CD14-positive monocyte (primary cell): ENCODE measurements at regions of chr15 and their contacts with region 1.

Region 1: GRCh38 chr15:44663409-44664308 is at the start of gene SPG11:
- DNase-seq: peak; percentile 98
- H3K4me3 ChIP-seq: peak within 1 kb of the TSS; percentile 65 to 97 (median 86)
- H3K4me3 Mint-ChIP-seq: peak within 1 kb of the TSS; percentile 96 to 97
- H3K27ac ChIP-seq: peak within 1 kb of the TSS; percentile 96 to 98
- H3K27ac Mint-ChIP-seq: peak within 1 kb of the TSS; percentile 98 to 99 (median 99)
- H3K4me1 ChIP-seq: peaks cover 33 to 38% of the 10 kb centered on the region in 2 donors
- H3K4me1 Mint-ChIP-seq: peaks cover 40% of the 10 kb centered on the region
- H3K27me3 ChIP-seq: no peaks in the 10 kb centered on the region
- H3K27me3 Mint-ChIP-seq: peaks cover 0 to 1% (median 0%) of the 10 kb centered on the region in 3 donors
- CTCF ChIP-seq: peak; percentile 90
- polyA plus RNA-seq, gene SPG11: 26.4 to 140 (median 50.4) TPM

Region 2: GRCh38 chr15:44296625-44297524 is 366.8 kb before region 1 on chr15:
- intact Hi-C with region 1: loop called in 1 of 2 experiments (anchors 5 kb)
- DNase-seq: peak; percentile 77 to 92 (median 91)
- H3K4me3 ChIP-seq: peak overlapping the region in 1 of 3 experiments; percentile 40
- H3K4me3 Mint-ChIP-seq: peak overlapping the region in 1 of 2 donors; percentile 77
- H3K27ac ChIP-seq: peak overlapping the region; percentile 48 to 55
- H3K27ac Mint-ChIP-seq: peak overlapping the region; percentile 75 to 95 (median 91)
- H3K4me1 ChIP-seq: peaks cover 45 to 55% of the 10 kb centered on the region in 2 donors
- H3K4me1 Mint-ChIP-seq: peaks cover 44% of the 10 kb centered on the region
- H3K27me3 ChIP-seq: no peaks in the 10 kb centered on the region
- H3K27me3 Mint-ChIP-seq: peaks cover 0 to 3% (median 0%) of the 10 kb centered on the region in 3 donors
- CTCF ChIP-seq: no peak

Region 3: DNA sequence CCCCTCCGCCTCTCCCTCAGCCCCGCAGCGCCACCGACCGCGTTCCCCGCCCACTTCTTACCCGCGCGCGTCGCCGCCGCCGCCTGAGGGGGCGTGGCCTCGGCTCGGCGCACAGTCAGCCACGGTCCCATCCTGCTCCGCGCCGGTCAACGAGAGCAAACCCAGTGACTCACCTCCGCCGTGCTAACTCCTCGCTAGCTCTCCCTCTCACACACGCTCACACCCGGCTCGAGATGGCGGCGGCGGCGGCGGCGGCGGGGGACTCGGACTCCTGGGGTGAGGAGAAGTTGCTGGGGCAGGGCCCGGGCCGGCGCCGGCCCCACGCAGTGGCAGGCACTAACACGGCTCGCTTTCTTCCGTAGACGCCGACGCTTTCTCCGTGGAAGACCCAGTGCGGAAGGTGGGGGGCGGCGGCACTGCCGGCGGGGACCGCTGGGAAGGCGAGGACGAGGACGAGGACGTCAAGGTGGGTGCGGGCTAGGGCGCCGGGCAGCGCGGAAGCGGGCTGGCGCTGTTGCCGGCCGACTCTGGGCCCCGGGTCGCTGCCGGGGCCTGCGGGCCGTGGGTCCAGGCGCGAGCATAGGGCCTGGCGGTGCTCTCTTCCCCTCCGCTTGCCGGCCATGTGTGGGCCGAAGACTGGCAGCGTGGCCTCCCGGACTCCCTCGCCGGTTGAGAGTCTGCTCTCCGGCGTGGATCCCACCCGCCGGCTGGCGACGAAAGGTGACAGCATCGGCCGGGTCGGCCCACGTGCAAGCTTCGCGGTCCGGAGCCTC is 126.5 kb before region 1 on chr15 and contains the start of gene EIF3J:
- intact Hi-C with region 1: loop called in 1 of 2 experiments (anchors 5 kb)
- DNase-seq: peak; percentile 97 to 98 (median 97)
- H3K4me3 ChIP-seq: peak within 1 kb of the TSS; percentile 86 to 95 (median 90)
- H3K4me3 Mint-ChIP-seq: peak within 1 kb of the TSS; percentile 85 to 93
- H3K27ac ChIP-seq: peak within 1 kb of the TSS; percentile 94 to 96
- H3K27ac Mint-ChIP-seq: peak within 1 kb of the TSS; percentile 93 to 98 (median 96)
- H3K4me1 ChIP-seq: peaks cover 12 to 27% of the 10 kb centered on the region in 2 donors
- H3K4me1 Mint-ChIP-seq: peaks cover 32% of the 10 kb centered on the region
- H3K27me3 ChIP-seq: no peaks in the 10 kb centered on the region
- H3K27me3 Mint-ChIP-seq: no peaks in the 10 kb centered on the region
- CTCF ChIP-seq: no peak
- polyA plus RNA-seq, gene EIF3J: 9.7 to 20.1 (median 13.5) TPM

Region 4: DNA sequence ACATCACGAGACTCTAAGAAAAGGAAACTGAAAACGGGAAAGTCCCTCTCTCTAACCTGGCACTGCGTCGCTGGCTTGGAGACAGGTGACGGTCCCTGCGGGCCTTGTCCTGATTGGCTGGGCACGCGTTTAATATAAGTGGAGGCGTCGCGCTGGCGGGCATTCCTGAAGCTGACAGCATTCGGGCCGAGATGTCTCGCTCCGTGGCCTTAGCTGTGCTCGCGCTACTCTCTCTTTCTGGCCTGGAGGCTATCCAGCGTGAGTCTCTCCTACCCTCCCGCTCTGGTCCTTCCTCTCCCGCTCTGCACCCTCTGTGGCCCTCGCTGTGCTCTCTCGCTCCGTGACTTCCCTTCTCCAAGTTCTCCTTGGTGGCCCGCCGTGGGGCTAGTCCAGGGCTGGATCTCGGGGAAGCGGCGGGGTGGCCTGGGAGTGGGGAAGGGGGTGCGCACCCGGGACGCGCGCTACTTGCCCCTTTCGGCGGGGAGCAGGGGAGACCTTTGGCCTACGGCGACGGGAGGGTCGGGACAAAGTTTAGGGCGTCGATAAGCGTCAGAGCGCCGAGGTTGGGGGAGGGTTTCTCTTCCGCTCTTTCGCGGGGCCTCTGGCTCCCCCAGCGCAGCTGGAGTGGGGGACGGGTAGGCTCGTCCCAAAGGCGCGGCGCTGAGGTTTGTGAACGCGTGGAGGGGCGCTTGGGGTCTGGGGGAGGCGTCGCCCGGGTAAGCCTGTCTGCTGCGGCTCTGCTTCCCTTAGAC is 47.9 kb after region 1 on chr15 and contains the start of gene B2M:
- intact Hi-C with region 1: loop called (anchors 2 kb)
- DNase-seq: peak; percentile 97 to 99 (median 98)
- H3K4me3 ChIP-seq: peak within 1 kb of the TSS; percentile 63 to 100 (median 96)
- H3K4me3 Mint-ChIP-seq: peak within 1 kb of the TSS; percentile 98 to 100
- H3K27ac ChIP-seq: peak within 1 kb of the TSS; percentile 99 to 100
- H3K27ac Mint-ChIP-seq: peak within 1 kb of the TSS; percentile 99 to 100 (median 100)
- H3K4me1 ChIP-seq: peaks cover 36 to 46% of the 10 kb centered on the region in 2 donors
- H3K4me1 Mint-ChIP-seq: peaks cover 41% of the 10 kb centered on the region
- H3K27me3 ChIP-seq: no peaks in the 10 kb centered on the region
- H3K27me3 Mint-ChIP-seq: peaks cover 2 to 9% (median 4%) of the 10 kb centered on the region in 3 donors
- CTCF ChIP-seq: no peak
- polyA plus RNA-seq, gene B2M: 17,356 to 28,278 (median 28,259) TPM

Region 5: GRCh38 chr15:44738340-44738984 is 74.8 kb after region 1 on chr15:
- intact Hi-C with region 1: loop called (anchors 2 to 5 kb)
- DNase-seq: peak; percentile 34 to 78 (median 60)
- H3K4me3 ChIP-seq: no peak overlapping the region
- H3K4me3 Mint-ChIP-seq: no peak overlapping the region
- H3K27ac ChIP-seq: no peak overlapping the region
- H3K27ac Mint-ChIP-seq: peak overlapping the region in 1 of 7 donors; percentile 35
- H3K4me1 ChIP-seq: peaks cover 23 to 24% of the 10 kb centered on the region in 2 donors
- H3K4me1 Mint-ChIP-seq: peaks cover 29% of the 10 kb centered on the region
- H3K27me3 ChIP-seq: no peaks in the 10 kb centered on the region
- H3K27me3 Mint-ChIP-seq: peaks cover 0 to 3% (median 0%) of the 10 kb centered on the region in 3 donors
- CTCF ChIP-seq: peak; percentile 79

Region 6: GRCh38 chr15:44788748-44789147 is 125.1 kb after region 1 on chr15:
- intact Hi-C with region 1: loop called (anchors 5 kb)
- DNase-seq: no peak
- H3K4me3 ChIP-seq: no peak overlapping the region
- H3K4me3 Mint-ChIP-seq: no peak overlapping the region
- H3K27ac ChIP-seq: no peak overlapping the region
- H3K27ac Mint-ChIP-seq: no peak overlapping the region
- H3K4me1 ChIP-seq: peaks cover 2 to 5% of the 10 kb centered on the region in 2 donors
- H3K4me1 Mint-ChIP-seq: peaks cover 8% of the 10 kb centered on the region
- H3K27me3 ChIP-seq: no peaks in the 10 kb centered on the region
- H3K27me3 Mint-ChIP-seq: peaks cover 0 to 4% (median 2%) of the 10 kb centered on the region in 3 donors
- CTCF ChIP-seq: no peak

Region 7: GRCh38 chr15:44798826-44799225 is 135.2 kb after region 1 on chr15:
- intact Hi-C with region 1: no loop called
- DNase-seq: no peak
- H3K4me3 ChIP-seq: no peak overlapping the region
- H3K4me3 Mint-ChIP-seq: no peak overlapping the region
- H3K27ac ChIP-seq: no peak overlapping the region
- H3K27ac Mint-ChIP-seq: peak overlapping the region in 1 of 7 donors; percentile 48
- H3K4me1 ChIP-seq: no peaks in the 10 kb centered on the region
- H3K4me1 Mint-ChIP-seq: peaks cover 10% of the 10 kb centered on the region
- H3K27me3 ChIP-seq: no peaks in the 10 kb centered on the region
- H3K27me3 Mint-ChIP-seq: no peaks in the 10 kb centered on the region
- CTCF ChIP-seq: no peak